Motor neuron (in vitro differentiated cells): ENCODE measurements at regions of chr17 and their contacts with region 1.

Region 1: GRCh38 chr17:73595479-73595878 is 48.8 kb downstream of the SDK2 start:
- ATAC-seq: peak; percentile 63 to 85 (median 82)
- H3K4me3 ChIP-seq: no peak overlapping the region
- H3K27ac ChIP-seq: no peak overlapping the region
- H3K4me1 ChIP-seq: peaks cover 31 to 50% of the 10 kb centered on the region in 2 donors

Region 2: DNA sequence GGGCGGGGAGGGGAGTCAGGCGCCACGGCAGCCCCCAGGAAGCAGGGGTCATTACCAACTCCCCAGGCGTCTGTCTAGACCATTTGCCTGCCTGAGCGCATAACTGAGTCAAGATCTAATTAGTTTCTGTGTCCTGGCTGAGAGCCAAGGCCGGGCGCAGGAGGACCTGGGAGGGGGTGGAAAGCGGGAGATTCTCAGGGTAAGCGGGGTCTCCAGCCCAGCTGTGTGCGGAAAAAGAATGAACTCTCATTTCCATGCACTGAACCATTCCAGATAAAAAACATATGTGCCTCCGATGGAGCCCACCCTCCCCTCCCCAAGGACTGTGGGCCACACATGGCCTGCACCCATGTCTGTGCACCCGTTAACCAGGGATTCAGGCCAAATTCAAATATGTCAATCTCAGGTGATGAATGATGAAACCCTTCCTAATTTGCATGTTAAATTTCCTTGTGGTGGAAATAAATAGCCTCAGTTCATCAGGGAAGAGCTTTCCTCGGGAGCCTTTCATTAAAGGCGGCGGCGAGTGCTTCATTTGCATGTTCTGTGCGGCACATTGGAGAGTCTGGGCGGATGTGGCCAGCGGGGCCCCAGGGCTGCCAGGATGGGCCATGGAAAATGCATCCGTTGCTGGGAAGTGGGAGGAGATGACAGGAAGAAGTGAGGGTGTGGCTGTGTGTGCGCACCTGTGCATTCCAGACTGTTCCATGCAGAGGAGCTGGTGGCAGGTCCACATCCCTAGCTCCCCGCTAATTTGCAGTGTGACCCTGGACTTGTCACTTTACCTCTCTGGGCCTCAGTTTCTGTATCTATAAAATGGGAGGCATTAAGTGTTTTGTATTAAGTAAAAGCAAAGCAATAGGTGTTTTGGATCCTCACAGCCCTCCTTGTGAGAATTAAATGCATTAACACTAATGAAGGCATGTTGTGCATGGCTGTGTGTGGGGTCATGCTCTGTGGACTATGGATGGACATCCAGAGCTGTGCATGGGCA is 102.4 kb before region 1 on chr17:
- in situ Hi-C with region 1: loop called in 1 of 9 experiments (anchors 25 kb)
- ATAC-seq: peak; percentile 70 to 94 (median 74)
- H3K4me3 ChIP-seq: no peak overlapping the region
- H3K27ac ChIP-seq: peak overlapping the region in 1 of 2 donors; percentile 31
- H3K4me1 ChIP-seq: peaks cover 47% of the 10 kb centered on the region in 2 donors

Region 3: DNA sequence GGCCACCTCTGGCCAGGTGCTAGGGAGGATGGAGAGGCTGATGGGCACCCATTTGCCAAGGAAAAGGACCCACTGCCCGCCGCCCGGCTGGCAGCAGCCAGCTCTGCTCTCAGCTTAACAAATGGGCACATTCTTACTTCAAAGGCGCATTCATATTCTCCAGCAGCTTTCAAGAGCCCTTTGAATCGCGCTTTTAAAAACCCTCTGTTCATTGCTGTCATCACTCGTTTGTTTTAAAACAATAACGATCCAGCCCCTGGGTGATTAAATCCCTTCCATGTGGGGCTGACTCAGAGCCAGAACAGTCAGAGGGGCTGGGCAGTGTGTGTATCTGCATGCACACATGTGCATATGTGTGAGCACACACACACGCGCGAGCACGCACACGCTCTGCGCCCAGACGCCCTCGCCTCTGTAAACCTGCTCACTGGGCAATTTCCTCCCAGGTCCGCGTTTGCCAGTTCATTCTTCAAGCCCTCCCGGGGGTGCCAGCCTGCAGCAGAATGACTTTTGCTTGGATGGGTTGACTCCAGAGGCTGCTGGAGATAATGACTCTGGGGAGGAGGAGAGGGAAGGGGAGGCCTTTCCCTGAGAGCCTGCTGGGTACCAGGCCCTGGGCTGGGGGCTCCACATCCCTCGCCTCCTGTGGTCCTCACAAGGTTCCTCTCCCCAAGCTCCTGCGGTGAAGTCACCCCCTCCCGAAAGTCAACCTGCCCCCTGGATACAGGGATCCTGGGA is 84.3 kb before region 1 on chr17:
- in situ Hi-C with region 1: no loop called
- ATAC-seq: peak; percentile 76 to 93 (median 89)
- H3K4me3 ChIP-seq: no peak overlapping the region
- H3K27ac ChIP-seq: peak overlapping the region in 1 of 2 donors; percentile 61
- H3K4me1 ChIP-seq: peaks cover 57 to 59% of the 10 kb centered on the region in 2 donors

Region 4: DNA sequence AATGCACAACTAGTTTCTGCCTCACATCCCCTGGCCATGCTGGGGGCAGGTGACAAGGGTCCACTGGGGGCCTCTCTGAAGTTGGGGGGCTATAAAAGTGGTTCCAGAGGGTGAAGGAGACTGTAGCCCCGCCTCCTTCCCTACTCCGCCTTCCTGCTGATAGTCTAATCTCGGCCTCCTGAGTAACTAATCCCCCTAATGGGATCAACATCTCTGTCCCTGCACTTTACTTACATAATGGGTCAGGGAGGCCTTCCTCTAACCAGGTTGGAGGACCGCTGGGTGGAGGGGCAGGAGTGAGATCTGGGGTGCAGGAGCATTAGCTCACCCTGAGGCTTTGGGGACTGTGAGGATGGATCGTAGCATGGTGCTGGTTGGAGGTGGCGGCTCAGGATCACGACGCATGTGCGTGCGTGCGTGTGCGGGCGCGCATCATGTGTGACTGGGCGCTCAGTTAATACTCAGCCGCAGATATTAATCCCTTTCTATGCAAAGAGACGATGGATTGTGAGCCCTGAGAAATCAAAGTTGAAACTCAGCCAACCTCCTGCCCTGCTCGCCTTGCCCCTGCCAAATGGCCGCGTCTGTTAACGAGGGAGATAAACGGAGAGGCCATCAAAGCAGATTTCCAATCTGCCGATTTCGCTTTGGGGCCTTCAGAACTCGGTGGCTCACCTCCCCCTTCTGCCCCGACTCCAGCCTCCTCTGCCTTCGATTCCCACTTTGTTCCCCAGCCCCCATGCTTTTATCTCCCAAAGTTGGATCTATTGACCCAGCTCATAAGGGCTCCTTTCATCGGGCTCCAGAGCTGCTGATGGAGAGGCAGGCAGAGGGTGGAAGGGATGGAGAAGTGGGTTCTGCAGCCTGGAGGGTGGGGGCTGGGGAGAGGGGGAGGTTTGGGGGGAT is 58.5 kb before region 1 on chr17:
- in situ Hi-C with region 1: no loop called
- ATAC-seq: no peak
- H3K4me3 ChIP-seq: no peak overlapping the region
- H3K27ac ChIP-seq: no peak overlapping the region
- H3K4me1 ChIP-seq: peaks cover 75 to 84% of the 10 kb centered on the region in 2 donors

Region 5: GRCh38 chr17:73710095-73710592 is 114.7 kb after region 1 on chr17:
- in situ Hi-C with region 1: loop called in 1 of 9 experiments (anchors 25 kb)
- ATAC-seq: peak; percentile 12 to 89 (median 54)
- H3K4me3 ChIP-seq: no peak overlapping the region
- H3K27ac ChIP-seq: no peak overlapping the region
- H3K4me1 ChIP-seq: peaks cover 28 to 35% of the 10 kb centered on the region in 2 donors

Region 6: GRCh38 chr17:73900516-73900915 is 305.0 kb after region 1 on chr17:
- in situ Hi-C with region 1: no loop called
- ATAC-seq: peak in 1 of 8 experiments; percentile 21
- H3K4me3 ChIP-seq: no peak overlapping the region
- H3K27ac ChIP-seq: no peak overlapping the region
- H3K4me1 ChIP-seq: peaks cover 26 to 30% of the 10 kb centered on the region in 2 donors

Region 7: DNA sequence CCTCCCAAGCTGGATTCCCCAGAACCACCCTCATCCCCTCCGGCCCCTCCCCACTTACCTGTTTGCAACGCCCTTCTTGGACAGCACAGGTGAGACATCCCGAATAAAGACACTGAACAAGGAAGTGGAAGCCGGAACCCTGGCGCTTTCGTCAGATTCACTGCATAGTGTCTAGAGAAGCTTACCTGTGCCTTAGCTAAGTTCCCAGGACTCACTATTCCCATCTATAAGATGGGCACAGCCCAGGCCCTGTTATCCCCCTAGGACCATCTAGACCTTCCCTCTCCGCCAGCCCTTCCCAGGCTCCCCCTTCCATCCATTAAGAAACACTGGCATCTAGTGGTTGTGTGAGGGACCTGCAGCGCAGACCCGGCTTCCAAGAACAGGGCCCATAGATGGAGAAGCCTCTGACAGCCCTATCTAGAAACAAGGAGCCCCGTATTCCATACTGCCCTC is 581.1 kb after region 1 on chr17:
- in situ Hi-C with region 1: loop called in 1 of 9 experiments (anchors 25 kb)
- ATAC-seq: peak; percentile 67 to 97 (median 78)
- H3K4me3 ChIP-seq: no peak overlapping the region
- H3K27ac ChIP-seq: no peak overlapping the region
- H3K4me1 ChIP-seq: peaks cover 7 to 16% of the 10 kb centered on the region in 2 donors